AG04450 (cell line): ENCODE measurements at regions of chrX and their contacts with region 1.

Region 1: DNA sequence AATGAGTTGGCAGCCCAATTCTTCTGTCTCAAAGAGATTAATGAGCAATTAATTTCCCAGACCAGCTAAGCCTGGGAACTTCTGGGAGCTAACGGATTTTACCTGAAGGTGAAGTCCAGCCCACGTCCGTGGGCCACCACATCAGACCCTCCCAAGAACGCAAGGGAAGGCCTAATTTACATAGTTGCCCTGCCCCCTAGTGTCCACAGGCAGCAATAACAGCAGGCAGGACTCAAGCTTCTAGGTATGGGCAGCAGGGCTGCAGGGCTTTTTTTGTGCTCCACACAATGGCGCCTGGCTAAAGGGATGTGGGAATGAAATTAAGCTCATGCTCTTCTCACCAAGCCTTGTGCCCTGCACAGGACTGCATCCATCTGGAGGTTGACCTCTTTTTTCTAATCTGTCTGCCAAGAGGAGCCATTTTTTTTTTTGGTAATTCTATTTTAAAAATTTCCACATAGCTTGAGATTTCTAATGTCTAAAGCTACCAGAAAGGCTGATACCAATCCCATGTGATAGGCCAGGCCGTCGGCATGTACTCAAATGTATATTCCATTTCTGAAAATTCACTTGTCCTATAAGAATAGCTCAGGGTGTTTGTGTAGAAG is 111.9 kb upstream of the TMEM164 start:
- DNase-seq: no peak
- H3K4me3 ChIP-seq: no peak overlapping the region
- H3K27ac ChIP-seq: no peak overlapping the region
- H3K27me3 ChIP-seq: no peaks in the 10 kb centered on the region
- CTCF ChIP-seq: peak; percentile 83

Region 2: DNA sequence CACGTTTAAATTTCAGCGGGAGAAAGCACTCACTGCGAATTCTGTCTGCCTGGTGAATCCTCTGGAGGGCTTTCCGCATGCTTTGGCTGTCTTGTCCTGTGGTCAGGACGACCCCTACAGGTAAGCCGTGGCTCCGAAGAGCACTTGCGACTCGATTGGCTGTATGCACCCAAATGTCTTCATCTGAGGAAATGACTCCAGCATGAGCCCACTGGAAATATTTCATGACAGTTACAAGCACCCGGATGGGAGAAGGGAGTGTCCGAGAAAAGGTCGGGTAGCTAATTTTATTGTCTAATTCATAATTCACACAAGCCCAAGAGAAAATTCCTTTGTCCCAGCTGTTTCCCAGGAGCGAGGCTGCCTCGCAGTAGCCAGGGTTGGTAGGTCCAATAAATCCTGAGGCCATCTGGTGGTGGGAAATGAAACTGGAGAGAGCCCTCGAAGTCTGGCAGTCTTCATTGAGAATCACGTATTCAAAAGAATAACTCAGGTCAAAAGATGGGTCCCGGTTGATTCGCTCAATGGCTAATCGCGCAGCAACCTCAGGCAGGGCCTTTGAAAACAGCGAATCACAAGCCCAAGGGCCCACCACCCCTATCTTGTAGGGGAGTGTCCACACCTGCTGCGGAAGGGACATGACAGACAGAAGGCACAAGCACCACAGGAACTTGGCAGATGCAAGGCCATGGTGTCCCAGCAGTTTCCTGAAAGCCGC is 415.7 kb before region 1 on chrX:
- CTCF ChIA-PET with region 1: interaction called, 19 read pairs
- POLR2A ChIA-PET with region 1: no interaction called
- DNase-seq: peak; percentile 2
- H3K4me3 ChIP-seq: peak overlapping the region; percentile 27; the same call in 1 of the 2 replicates
- H3K27ac ChIP-seq: no peak overlapping the region
- H3K27me3 ChIP-seq: no peaks in the 10 kb centered on the region
- CTCF ChIP-seq: peak; percentile 60

Region 3: DNA sequence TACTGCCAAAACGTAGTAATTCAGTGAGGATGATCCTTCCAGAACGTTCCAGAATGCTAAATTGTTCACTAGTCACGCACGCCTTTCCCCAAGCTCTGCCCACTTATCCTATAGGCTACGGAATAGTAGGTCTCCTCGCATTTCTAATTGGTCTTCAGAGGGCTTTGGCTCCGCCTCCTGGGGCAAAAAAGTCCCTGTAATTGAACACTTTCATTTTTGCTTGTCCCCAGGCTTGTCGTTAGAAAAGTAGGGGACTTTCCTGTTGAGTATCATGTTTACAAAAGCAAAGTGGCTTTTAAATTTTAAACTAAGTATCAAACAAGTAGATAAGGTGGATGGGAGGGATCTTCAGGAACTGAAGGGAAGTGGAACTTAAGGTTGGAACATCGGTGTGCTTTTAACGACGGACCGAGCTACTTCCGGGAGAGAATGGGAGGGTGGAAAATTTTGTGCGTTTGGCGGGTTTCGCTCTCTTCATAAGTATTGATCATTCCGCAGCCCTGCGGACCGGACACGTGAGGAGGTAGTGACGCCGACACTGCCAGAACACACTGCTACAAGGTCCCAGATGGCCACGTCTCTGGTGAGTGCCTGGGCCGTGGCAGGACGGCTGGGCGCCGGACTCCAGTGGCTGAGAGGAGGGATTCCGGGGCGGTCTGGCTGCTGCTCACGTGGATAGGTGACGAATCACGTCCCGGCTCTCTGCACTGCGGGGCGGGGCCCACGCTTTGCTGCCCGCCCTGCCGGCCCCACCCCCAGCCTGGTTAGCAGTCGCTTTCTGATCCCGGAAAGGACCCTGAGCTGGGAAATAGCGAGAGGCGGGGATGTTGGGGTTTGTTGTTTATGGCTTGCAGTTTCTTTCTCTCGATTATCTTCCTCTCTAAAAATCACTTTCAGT is 354.3 kb before region 1 on chrX and contains the start of gene NXT2:
- CTCF ChIA-PET with region 1: interaction called, 16 read pairs
- POLR2A ChIA-PET with region 1: no interaction called
- DNase-seq: peak; percentile 74
- H3K4me3 ChIP-seq: peak within 1 kb of the TSS; percentile 69
- H3K27ac ChIP-seq: peak within 1 kb of the TSS; percentile 74
- H3K27me3 ChIP-seq: no peaks in the 10 kb centered on the region
- CTCF ChIP-seq: no peak
- polyA plus RNA-seq, gene NXT2: 7.8 and 10.5 TPM in 2 replicates

Region 4: GRCh38 chrX:109679820-109680219 is 211.2 kb before region 1 on chrX:
- CTCF ChIA-PET with region 1: interaction called, 12 read pairs
- POLR2A ChIA-PET with region 1: no interaction called
- DNase-seq: no peak
- H3K4me3 ChIP-seq: no peak overlapping the region
- H3K27ac ChIP-seq: no peak overlapping the region
- H3K27me3 ChIP-seq: no peaks in the 10 kb centered on the region
- CTCF ChIP-seq: no peak

Region 5: DNA sequence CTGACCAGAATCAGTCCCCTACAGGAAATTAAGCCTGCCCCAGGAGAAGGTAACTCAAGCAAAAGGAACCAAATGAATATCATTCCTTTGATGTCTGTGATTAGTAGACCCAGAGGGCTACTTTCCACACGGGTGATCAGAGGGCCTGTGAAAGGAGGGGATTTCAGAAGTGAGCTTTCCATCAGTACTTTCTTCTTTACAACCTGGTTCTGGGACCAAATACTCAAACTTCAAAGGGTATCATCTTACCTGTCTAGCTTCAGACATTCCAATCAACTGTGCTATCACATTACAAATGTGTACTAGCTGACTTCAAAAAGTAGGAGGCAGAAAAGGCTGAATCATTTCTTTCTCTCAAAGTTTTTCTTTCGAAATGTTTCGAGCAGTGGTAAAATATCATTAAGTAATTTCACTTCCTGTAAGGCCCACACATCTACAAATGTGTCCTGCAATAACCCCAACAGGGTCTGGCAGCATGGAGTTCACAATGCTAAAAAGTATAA is 181.8 kb before region 1 on chrX:
- CTCF ChIA-PET with region 1: interaction called, 136 read pairs
- POLR2A ChIA-PET with region 1: no interaction called
- DNase-seq: no peak
- H3K4me3 ChIP-seq: no peak overlapping the region
- H3K27ac ChIP-seq: peak overlapping the region; percentile 39
- H3K27me3 ChIP-seq: no peaks in the 10 kb centered on the region
- CTCF ChIP-seq: 0 out of 2 replicates have a peak, but pooled peaks have one; percentile 7

Region 6: GRCh38 chrX:109872021-109872732 is 18.8 kb before region 1 on chrX:
- CTCF ChIA-PET with region 1: interaction called, 14 read pairs
- POLR2A ChIA-PET with region 1: no interaction called
- DNase-seq: peak; percentile 90
- H3K4me3 ChIP-seq: no peak overlapping the region
- H3K27ac ChIP-seq: peak overlapping the region; percentile 11
- H3K27me3 ChIP-seq: no peaks in the 10 kb centered on the region
- CTCF ChIP-seq: no peak

Region 7: DNA sequence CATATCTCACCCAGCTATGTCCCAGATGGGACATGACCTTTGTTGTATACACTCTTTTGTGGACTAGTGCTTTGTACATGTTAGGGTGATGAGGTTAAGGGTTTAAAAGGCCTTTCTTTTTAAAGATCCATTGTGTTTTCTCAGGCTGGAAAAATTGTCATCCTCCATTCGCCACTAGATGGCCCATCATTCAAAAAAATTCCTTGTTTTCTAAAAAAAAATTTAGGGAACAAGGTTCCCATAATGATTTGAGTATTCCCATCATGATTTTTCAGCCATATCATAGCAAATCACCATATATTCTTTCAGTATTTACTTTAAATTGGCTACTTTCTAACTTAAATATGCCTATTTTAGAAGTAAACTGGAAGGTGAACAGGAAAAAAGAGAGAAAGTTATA is 20.0 kb after region 1 on chrX:
- CTCF ChIA-PET with region 1: interaction called, 21 read pairs
- POLR2A ChIA-PET with region 1: no interaction called
- DNase-seq: no peak
- H3K4me3 ChIP-seq: no peak overlapping the region
- H3K27ac ChIP-seq: no peak overlapping the region
- H3K27me3 ChIP-seq: peaks cover 1% of the 10 kb centered on the region
- CTCF ChIP-seq: peak; percentile 58

Region 8: DNA sequence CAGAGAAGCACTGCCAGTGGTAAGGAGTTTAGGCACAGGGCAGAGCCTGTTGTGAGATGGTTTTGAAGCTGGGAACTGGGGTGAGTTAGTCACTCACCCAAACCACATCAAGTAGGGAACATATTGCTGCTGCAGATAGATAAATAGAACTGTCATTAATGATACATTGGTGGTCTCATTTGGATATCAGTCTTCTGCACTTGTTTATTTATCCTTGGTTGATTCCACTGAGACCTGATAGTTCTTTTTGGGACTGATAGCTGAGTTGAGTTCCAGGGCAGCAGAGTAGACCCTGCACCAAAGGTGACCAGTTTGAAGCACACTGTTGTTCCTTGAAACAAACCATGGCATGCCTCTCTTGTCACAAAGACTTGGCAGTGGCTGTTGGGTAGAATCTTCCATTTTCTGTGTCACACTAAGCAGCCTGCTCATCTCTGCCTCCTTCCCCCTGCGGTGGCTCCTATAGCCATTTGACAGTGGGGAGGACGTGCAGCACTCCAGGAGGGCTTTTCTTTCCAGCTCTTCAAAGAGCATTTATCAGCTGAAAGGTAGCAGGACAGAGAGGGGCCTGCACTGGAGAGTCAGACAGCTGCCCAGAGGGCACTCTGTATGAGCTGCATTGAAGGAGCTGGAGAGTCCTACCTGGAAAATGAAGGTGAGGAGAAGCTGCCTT is 52.2 kb after region 1 on chrX:
- CTCF ChIA-PET with region 1: no interaction called
- POLR2A ChIA-PET with region 1: no interaction called
- DNase-seq: no peak
- H3K4me3 ChIP-seq: no peak overlapping the region
- H3K27ac ChIP-seq: no peak overlapping the region
- H3K27me3 ChIP-seq: no peaks in the 10 kb centered on the region
- CTCF ChIP-seq: no peak